Right lobe of liver (tissue), 6 donors: ENCODE measurements at regions of chr18 and their contacts with region 1.

Region 1: DNA sequence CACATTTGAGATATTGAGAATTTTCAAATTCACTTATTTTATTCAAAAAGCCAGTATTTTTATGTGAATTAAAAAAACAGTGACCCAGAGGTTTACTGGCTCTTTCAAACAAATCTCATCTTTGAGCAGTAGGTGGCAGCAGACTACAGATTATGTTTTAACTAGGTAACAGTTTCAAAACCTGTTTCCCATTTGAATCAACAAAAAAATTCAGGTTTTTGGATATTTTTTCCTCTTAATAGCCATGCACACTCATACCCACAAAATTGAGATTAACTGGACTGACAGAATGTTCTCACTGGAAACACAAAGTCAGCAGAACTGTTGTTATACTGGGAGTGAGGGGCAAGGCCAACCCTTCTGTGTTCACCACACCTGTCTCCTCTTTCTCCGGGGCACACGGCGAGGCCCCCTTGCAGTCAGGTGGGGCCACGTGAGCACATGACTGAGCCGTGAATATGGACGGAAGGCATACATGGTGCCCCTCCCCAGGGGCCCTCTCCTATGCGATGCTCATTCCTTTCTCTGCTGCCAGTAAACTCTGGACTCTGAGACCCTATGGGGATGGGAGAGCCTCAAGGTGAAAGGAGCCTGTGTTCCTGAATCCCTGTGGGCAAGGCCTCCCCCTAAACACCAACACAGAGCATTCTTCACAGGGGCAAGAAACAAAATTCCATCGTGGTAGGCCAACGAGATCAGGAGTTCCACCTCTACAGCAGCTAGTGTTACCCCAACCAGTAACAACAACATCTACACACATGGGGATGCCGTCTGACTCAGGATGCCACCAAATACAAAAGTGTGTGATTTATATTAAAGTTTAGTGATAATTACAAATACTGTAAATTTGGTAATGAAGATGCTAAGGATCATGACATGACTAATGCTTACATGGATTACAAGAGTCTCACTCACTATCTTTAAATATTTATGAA is 80.4 kb downstream of the LPIN2 start:
- DNase-seq: no peak
- ATAC-seq: peak; percentile 59 to 77 (median 66)
- H3K4me3 ChIP-seq: no peak overlapping the region
- H3K27ac ChIP-seq: peak overlapping the region in 1 of 3 donors; percentile 10
- H3K4me1 ChIP-seq: no peaks in the 10 kb centered on the region
- H3K27me3 ChIP-seq: no peaks in the 10 kb centered on the region
- CTCF ChIP-seq: peak; percentile 64 to 81 (median 70)
- POLR2A ChIP-seq: no peak

Region 2: GRCh38 chr18:2985628-2986027 is 53.1 kb after region 1 on chr18:
- intact Hi-C with region 1: loop called in 1 of 2 experiments (anchors 10 kb)
- DNase-seq: no peak
- ATAC-seq: peak; percentile 36 to 57 (median 49)
- H3K4me3 ChIP-seq: no peak overlapping the region
- H3K27ac ChIP-seq: peak overlapping the region; percentile 78 to 95 (median 94)
- H3K4me1 ChIP-seq: peaks cover 0 to 42% (median 16%) of the 10 kb centered on the region in 4 donors
- H3K27me3 ChIP-seq: no peaks in the 10 kb centered on the region
- CTCF ChIP-seq: peak; percentile 48 to 67 (median 63)
- POLR2A ChIP-seq: no peak

Region 3: DNA sequence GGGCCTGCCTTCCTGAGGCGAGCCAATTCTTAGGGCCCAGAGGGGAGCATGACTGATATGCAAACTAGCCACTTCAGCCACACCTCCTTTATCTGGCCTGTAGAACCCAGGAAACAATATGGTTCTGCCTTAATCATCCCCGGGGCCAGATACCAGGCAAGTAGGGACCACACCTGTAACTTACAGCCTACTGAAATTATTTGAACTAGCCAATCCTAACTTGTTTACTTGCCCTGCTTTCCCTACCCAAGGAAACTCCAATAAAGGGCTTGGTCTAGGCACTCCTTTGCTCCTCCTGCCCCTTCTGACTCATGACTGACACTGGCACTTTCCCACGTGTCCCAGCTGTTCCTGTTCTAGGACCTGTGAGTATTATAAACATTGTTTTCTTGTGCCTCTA is 229.7 kb after region 1 on chr18:
- intact Hi-C with region 1: no loop called
- DNase-seq: no peak
- ATAC-seq: no peak
- H3K4me3 ChIP-seq: no peak overlapping the region
- H3K27ac ChIP-seq: no peak overlapping the region
- H3K4me1 ChIP-seq: peaks cover 0 to 11% (median 0%) of the 10 kb centered on the region in 4 donors
- H3K27me3 ChIP-seq: no peaks in the 10 kb centered on the region
- CTCF ChIP-seq: no peak
- POLR2A ChIP-seq: no peak

Region 4: GRCh38 chr18:3245853-3246634 is 313.5 kb after region 1 on chr18:
- intact Hi-C with region 1: loop called in 1 of 2 experiments (anchors 10 kb)
- DNase-seq: peak; percentile 92 to 95 (median 93)
- ATAC-seq: peak; percentile 71 to 83 (median 74)
- H3K4me3 ChIP-seq: peak overlapping the region; percentile 87 to 95 (median 89)
- H3K27ac ChIP-seq: peak overlapping the region; percentile 99 to 100 (median 99)
- H3K4me1 ChIP-seq: peaks cover 0 to 25% (median 0%) of the 10 kb centered on the region in 4 donors
- H3K27me3 ChIP-seq: no peaks in the 10 kb centered on the region
- CTCF ChIP-seq: peak; percentile 94 to 97 (median 94)
- POLR2A ChIP-seq: peak; percentile 68